ENCODE measurements at regions of chr16 and their contacts with region 1.

Region 1: GRCh38 chr16:89490387-89491237 is at the start of gene ANKRD11:
- H3K4me3 ChIP-seq: peak within 1 kb of the TSS; percentile 81
- H3K27ac ChIP-seq: peak within 1 kb of the TSS; percentile 91
- H3K4me1 ChIP-seq: peaks cover 22% of the 10 kb centered on the region
- CTCF ChIP-seq: no peak

Region 2: GRCh38 chr16:89308390-89309333 is 181.9 kb before region 1 on chr16:
- CTCF ChIA-PET with region 1: no interaction called
- POLR2A ChIA-PET with region 1: no interaction called
- H3K4me3 ChIP-seq: no peak overlapping the region
- H3K27ac ChIP-seq: no peak overlapping the region
- H3K4me1 ChIP-seq: no peaks in the 10 kb centered on the region
- CTCF ChIP-seq: peak; percentile 30; the same call in 1 of the 2 replicates

Region 3: DNA sequence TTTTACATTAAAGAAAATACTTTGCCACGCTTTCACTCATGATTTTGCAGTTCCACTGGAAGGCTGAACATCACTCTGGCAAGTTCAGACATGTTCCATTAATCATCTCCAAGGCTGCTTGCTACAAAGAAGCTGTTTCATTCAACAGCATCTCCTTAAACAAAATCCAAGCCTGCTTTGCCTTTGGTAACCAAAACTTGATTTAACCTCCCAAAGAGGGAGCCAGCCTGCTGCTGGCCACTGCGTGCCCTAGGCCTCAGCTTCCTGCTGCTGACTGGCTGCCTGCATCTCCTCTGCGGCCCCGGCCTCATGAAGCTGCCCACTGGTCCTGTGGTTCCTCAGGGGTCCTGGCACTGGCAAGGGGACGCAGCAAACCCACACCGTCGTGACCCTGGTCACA is 32.1 kb before region 1 on chr16:
- CTCF ChIA-PET with region 1: no interaction called
- POLR2A ChIA-PET with region 1: no interaction called
- H3K4me3 ChIP-seq: no peak overlapping the region
- H3K27ac ChIP-seq: peak overlapping the region; percentile 74
- H3K4me1 ChIP-seq: no peaks in the 10 kb centered on the region; the same call in 1 of the 2 replicates
- CTCF ChIP-seq: no peak

Region 4: GRCh38 chr16:89507834-89508590 is 17.4 kb after region 1 on chr16 and contains the start of gene SPG7:
- CTCF ChIA-PET with region 1: no interaction called
- POLR2A ChIA-PET with region 1: interaction called, 11 read pairs
- H3K4me3 ChIP-seq: peak within 1 kb of the TSS; percentile 86
- H3K27ac ChIP-seq: peak within 1 kb of the TSS; percentile 80
- H3K4me1 ChIP-seq: no peaks in the 10 kb centered on the region
- CTCF ChIP-seq: peak; percentile 72

Measured in HEK293 (cell line).